ENCODE measurements at regions of chrX and their contacts with region 1.

Region 1: DNA sequence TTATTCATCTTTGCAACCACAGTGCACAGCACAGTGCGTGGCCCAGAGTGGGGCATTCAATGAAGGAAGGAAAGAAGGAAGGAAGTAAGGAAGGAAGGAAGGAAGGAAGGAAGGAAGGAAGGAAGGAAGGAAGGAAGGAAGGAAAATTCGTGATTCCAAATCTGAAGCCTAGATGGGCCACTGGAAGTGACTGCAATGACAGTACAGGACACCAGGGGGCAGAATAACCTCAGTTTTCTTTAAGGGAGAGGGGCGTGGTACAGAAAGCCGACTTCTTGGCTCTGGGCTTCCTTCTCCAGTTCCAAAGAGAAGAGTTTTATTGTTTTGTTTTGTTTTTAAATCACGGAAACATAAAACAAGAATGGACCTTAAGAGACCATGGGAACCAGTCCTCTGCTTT is 47.8 kb downstream of the APLN start:
- DNase-seq: peak; percentile 10
- H3K4me3 Mint-ChIP-seq: no peak overlapping the region
- H3K27ac Mint-ChIP-seq: peak overlapping the region; percentile 2
- H3K4me1 Mint-ChIP-seq: peaks cover 19% of the 10 kb centered on the region
- H3K27me3 Mint-ChIP-seq: peaks cover 3% of the 10 kb centered on the region

Region 2: DNA sequence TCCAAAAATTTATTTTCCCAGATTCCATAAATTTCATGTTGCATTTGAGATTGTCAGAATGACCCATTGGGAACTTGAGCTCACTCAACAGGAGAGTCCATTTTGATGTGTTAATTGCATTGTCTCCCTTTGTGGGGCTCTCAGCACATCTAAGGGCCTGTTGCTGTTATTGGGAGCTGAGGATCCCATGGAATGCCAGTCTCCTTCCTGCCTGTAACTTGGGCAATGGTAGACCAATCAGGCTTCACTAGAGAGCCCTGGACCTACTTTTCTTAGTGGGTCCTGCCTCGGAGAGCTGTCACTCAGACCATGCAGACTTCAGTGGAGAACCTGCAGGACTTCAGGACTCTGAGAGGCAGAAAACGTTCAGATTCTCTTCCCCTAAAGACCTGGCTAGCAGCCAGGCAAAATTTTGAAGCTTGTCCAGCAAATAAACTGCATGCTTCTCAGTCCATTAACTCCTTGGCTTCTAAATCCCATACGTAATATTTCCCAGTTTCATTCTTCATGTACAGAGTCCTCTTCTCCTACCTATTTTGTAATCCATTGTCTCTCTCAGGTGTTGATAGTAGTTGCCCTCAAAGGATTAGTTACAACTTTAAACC is 41.8 kb before region 1 on chrX:
- intact Hi-C with region 1: no loop called
- DNase-seq: no peak
- H3K4me3 Mint-ChIP-seq: no peak overlapping the region
- H3K27ac Mint-ChIP-seq: no peak overlapping the region
- H3K4me1 Mint-ChIP-seq: peaks cover 7% of the 10 kb centered on the region
- H3K27me3 Mint-ChIP-seq: no peaks in the 10 kb centered on the region

Region 3: GRCh38 chrX:129726307-129727111 is 119.6 kb after region 1 on chrX:
- intact Hi-C with region 1: loop called (anchors 2 kb)
- DNase-seq: no peak
- H3K4me3 Mint-ChIP-seq: no peak overlapping the region
- H3K27ac Mint-ChIP-seq: no peak overlapping the region
- H3K4me1 Mint-ChIP-seq: peaks cover 31% of the 10 kb centered on the region
- H3K27me3 Mint-ChIP-seq: peaks cover 7% of the 10 kb centered on the region

Region 4: GRCh38 chrX:129823115-129823514 is 216.2 kb after region 1 on chrX:
- intact Hi-C with region 1: loop called (anchors 10 kb)
- DNase-seq: no peak
- H3K4me3 Mint-ChIP-seq: no peak overlapping the region
- H3K27ac Mint-ChIP-seq: peak overlapping the region; percentile 81
- H3K4me1 Mint-ChIP-seq: peaks cover 14% of the 10 kb centered on the region
- H3K27me3 Mint-ChIP-seq: no peaks in the 10 kb centered on the region

Region 5: GRCh38 chrX:129905787-129906580 is 299.1 kb after region 1 on chrX and contains the start of gene UTP14A:
- intact Hi-C with region 1: loop called (anchors 5 kb)
- DNase-seq: peak; percentile 83
- H3K4me3 Mint-ChIP-seq: peak within 1 kb of the TSS; percentile 90
- H3K27ac Mint-ChIP-seq: peak within 1 kb of the TSS; percentile 86
- H3K4me1 Mint-ChIP-seq: peaks cover 14% of the 10 kb centered on the region
- H3K27me3 Mint-ChIP-seq: no peaks in the 10 kb centered on the region
- total RNA-seq, gene UTP14A: 46.6 and 49.9 TPM in 2 replicates

Region 6: DNA sequence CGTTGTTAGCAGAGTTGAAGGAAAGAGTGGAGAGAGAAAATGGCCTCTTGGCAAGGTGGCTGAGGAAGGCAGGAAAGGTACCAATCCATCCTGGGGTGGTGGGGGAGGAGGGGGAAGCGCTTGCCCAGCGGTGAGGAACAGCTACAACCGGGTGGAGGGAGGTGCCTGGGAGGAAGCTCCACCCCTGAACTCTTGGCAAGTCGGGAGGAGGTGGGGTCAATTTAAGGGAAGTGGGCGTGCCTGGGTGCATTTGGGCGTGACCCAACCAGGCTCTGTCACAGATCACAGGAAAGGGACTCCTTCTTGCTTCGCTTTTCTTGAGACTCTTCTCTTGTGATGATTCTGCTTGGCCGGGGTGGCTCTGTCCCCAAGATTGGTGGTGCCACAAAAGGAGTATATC is 417.2 kb after region 1 on chrX:
- intact Hi-C with region 1: loop called (anchors 10 kb)
- DNase-seq: peak; percentile 78
- H3K4me3 Mint-ChIP-seq: peak overlapping the region; percentile 37
- H3K27ac Mint-ChIP-seq: no peak overlapping the region
- H3K4me1 Mint-ChIP-seq: peaks cover 8% of the 10 kb centered on the region
- H3K27me3 Mint-ChIP-seq: no peaks in the 10 kb centered on the region

Region 7: DNA sequence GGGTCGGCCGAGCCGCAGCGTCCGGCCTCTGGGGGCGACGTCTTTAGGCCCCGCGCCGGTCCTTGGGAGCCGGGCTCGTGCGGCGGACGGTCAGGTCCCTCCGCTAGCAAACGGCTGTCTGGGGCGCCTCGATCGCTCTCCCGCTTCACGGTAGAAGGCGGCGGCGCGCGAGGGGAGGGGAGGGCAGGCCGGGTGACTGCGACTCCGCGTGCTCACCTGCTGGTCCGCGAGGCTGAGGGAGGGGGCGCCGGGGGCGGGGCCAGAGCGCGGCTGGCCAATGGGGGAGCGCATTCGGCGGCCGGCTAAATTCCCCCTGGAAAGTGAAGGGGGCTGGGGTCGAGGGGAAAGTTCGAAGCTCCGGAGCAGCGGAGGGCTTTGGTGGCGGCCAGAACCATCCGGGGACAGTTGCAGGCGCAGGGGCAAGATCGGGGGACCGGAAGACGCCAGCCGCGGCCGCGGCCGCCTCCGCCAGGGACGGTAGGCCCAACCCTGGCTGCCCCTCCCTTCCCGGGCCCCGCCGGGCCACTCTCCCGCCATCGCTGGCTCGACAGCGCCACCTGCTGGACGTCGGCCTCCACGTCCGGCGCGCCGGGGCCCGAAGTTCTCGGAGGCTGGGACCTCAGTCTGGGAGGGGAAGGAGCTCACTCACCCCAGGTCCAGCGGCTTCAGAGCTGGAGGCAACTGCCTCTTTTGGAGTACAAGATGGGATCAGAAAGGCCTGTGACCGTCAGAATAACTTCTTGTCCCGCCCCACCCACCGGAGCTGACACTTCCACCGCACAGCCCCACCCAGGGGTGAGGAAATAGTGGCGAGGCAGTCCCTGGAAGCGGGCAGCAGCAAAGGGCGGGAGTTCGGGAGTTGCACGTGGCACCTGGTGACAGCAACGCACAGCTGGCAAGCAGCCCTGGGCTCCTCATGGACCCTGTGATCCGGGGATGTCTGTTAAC is 453.5 kb after region 1 on chrX:
- intact Hi-C with region 1: loop called (anchors 1 kb)
- DNase-seq: peak; percentile 73
- H3K4me3 Mint-ChIP-seq: peak overlapping the region; percentile 76
- H3K27ac Mint-ChIP-seq: peak overlapping the region; percentile 80
- H3K4me1 Mint-ChIP-seq: peaks cover 3% of the 10 kb centered on the region
- H3K27me3 Mint-ChIP-seq: no peaks in the 10 kb centered on the region

Measured in activated T-helper 2 cell treated with anti-CD3 and anti-CD28 coated beads, Interferon-gamma antibody, Interleukin-2, Interleukin-4, amounts not matched to agents 10 μg/mL and 5 μg/mL and 100 μg/mL, durations not matched to agents 14 hours and 24 hours and 36 hours (primary cell).